Caki2 (cell line): ENCODE measurements at regions of chr20 and their contacts with region 1.

Region 1: DNA sequence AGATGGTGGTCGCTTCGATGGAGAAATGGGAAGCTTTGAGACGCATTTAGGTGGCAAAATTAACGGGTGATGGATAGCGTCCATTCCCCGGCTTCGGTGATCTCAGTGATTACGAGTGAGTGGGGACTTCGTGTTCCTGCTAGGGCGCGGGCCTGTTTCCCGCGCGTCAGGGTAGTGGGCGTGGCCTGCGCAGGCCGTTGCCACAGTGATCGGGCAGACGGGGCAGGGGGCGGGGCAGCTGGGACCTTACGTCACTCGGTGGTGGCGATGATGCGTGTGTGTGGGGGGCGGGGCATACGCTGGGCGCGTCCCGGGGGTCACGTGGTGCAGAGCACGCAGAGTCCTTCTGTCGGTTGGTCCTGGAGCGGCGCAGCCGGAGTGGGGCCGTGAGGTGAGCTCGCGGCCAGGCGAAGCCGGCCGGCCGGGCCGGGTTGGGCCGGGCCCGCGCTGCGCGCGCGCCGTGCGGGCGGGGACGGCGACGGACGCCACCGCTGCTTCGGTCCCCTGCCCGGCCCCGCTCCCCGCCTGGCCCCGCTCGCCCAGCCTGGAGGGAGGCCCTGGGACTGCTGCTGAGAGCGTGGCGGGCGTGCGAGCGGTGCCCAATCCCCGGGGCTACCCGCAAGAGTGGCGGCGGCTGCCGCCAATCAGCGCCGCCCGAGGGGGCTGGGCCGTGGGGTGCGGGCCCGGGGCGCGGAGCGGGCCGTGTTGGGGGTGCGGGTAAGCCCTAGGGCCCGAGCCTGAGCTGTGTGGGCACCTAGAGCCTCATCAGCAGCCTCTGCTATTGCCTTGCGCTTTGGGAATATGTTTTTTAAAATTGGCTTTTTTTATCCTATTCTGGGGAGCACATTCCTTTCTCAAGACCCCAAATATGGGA is at the start of gene PHF20:
- DNase-seq: peak; percentile 88
- total RNA-seq, gene PHF20: 31.1 and 66.9 TPM in 2 replicates

Region 2: GRCh38 chr20:35806075-35806474 is 34.1 kb after region 1 on chr20:
- in situ Hi-C with region 1: no loop called
- DNase-seq: no peak

Region 3: GRCh38 chr20:35866418-35867197 is 94.7 kb after region 1 on chr20:
- in situ Hi-C with region 1: loop called (anchors 10 kb)
- DNase-seq: no peak

Region 4: DNA sequence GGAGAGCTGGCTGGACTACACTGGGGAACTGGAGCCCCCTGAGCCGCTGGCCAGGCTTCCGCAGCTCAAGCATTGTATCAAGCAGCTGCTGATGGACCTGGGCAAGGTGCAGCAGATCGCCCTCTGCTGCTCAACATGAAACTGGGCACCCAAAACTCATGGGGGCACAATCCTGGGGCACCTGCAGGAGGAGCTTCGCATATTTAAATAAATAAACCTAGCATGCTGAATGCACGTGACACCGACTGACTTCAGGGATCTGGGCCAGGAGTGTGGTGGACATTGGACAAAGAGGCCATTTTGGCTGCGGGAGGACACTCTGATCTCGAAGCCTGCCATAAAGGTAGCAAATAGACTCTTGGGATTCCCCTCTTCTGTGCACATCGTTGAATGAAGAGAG is 175.6 kb after region 1 on chr20:
- in situ Hi-C with region 1: loop called (anchors 10 kb)
- DNase-seq: peak; percentile 19